ENCODE measurements at regions of chr2 and their contacts with region 1.

Region 1: GRCh38 chr2:8447610-8448221 is 234.1 kb upstream of the ID2 start:
- DNase-seq: peak; percentile 94
- ATAC-seq: peak; percentile 97
- H3K4me3 ChIP-seq: no peak overlapping the region
- H3K27ac ChIP-seq: peak overlapping the region; percentile 71
- H3K4me1 ChIP-seq: peaks cover 28% of the 10 kb centered on the region
- H3K27me3 ChIP-seq: no peaks in the 10 kb centered on the region
- CTCF ChIP-seq: no peak

Region 2: DNA sequence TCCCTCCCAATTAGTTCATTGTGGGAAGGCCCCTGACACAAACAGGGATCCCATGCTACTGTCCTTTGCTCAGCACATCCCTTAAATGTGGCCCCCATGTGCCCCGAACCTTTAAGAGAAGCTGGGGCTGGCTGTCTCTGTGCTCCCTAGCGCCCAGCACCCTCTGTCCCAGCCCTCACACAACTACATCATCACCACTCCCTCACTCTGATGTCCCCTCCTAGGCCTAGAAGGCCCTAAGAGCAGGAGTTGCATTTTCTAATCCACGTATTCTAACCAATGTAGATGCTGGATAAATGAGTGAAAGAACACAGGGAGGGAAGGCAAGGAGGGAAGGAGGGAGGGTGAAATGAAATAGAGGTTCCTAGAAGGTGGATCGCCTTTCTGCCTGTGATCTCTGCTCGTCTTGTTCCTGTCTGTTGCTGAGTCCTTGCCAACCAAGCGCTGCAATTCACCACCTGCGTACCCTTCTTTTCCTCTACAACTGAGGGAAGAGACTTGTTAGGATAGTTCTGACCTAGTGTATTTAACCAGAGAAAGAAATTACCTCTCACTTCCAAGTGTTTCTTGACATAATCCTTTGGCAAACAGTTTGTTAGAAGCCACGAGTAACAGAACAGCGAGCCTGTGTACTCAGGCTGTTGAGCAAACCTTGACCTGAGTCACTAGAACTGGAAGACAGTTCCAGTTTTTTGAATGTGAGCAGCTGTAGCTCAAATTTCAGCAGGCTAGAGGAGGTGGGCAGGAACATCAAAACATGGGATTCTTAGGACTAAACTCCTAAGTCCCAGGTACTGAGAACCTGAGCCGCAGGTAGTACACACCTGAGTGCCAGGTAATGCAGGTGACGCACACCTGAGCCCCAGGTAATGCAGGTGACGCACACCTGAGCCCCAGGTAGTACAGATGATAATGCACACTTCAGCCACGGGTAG is 52.7 kb after region 1 on chr2:
- CTCF ChIA-PET with region 1: no interaction called
- POLR2A ChIA-PET with region 1: no interaction called
- intact Hi-C with region 1: loop called (anchors 2 kb)
- DNase-seq: peak; percentile 80
- ATAC-seq: peak; percentile 97
- H3K4me3 ChIP-seq: peak overlapping the region; percentile 18; the same call in 1 of the 2 replicates
- H3K27ac ChIP-seq: peak overlapping the region; percentile 42
- H3K4me1 ChIP-seq: peaks cover 22% of the 10 kb centered on the region
- H3K27me3 ChIP-seq: no peaks in the 10 kb centered on the region
- CTCF ChIP-seq: no peak